ENCODE measurements at regions of chr22 and their contacts with region 1.

Region 1: GRCh38 chr22:39215426-39216120 is 29.2 kb downstream of the PDGFB start:
- DNase-seq: peak in 5 of 9 experiments; percentile 60 to 78 (median 67)
- ATAC-seq: peak; percentile 98
- H3K4me3 ChIP-seq: no peak overlapping the region
- H3K4me3 Mint-ChIP-seq: no peak overlapping the region
- H3K27ac ChIP-seq: no peak overlapping the region
- H3K27ac Mint-ChIP-seq: peak overlapping the region; percentile 57
- H3K4me1 ChIP-seq: peaks cover 4% of the 10 kb centered on the region
- H3K4me1 Mint-ChIP-seq: peaks cover 6% of the 10 kb centered on the region
- H3K27me3 ChIP-seq: no peaks in the 10 kb centered on the region
- H3K27me3 Mint-ChIP-seq: peaks cover 18% of the 10 kb centered on the region
- CTCF ChIP-seq: peak; percentile 42

Region 2: GRCh38 chr22:38398609-38399461 is 816.7 kb before region 1 on chr22:
- CTCF ChIA-PET with region 1: no interaction called
- POLR2A ChIA-PET with region 1: no interaction called
- intact Hi-C with region 1: no loop called
- DNase-seq: peak; percentile 67 to 91 (median 82)
- ATAC-seq: peak; percentile 79
- H3K4me3 ChIP-seq: peak overlapping the region; percentile 55 to 60
- H3K4me3 Mint-ChIP-seq: peak overlapping the region; percentile 81
- H3K27ac ChIP-seq: peak overlapping the region in 1 of 2 experiments; percentile 30
- H3K27ac Mint-ChIP-seq: no peak overlapping the region
- H3K4me1 ChIP-seq: no peaks in the 10 kb centered on the region
- H3K4me1 Mint-ChIP-seq: peaks cover 18% of the 10 kb centered on the region
- H3K27me3 ChIP-seq: no peaks in the 10 kb centered on the region
- H3K27me3 Mint-ChIP-seq: no peaks in the 10 kb centered on the region
- CTCF ChIP-seq: no peak

Region 3: GRCh38 chr22:39306581-39307361 is 91.2 kb after region 1 on chr22:
- CTCF ChIA-PET with region 1: interaction called, 18 read pairs
- POLR2A ChIA-PET with region 1: no interaction called
- intact Hi-C with region 1: loop called in 1 of 2 experiments (anchors 5 kb)
- DNase-seq: peak in 8 of 9 experiments; percentile 28 to 75 (median 60)
- ATAC-seq: peak; percentile 41
- H3K4me3 ChIP-seq: no peak overlapping the region
- H3K4me3 Mint-ChIP-seq: no peak overlapping the region
- H3K27ac ChIP-seq: no peak overlapping the region
- H3K27ac Mint-ChIP-seq: no peak overlapping the region
- H3K4me1 ChIP-seq: no peaks in the 10 kb centered on the region
- H3K4me1 Mint-ChIP-seq: peaks cover 9% of the 10 kb centered on the region
- H3K27me3 ChIP-seq: no peaks in the 10 kb centered on the region
- H3K27me3 Mint-ChIP-seq: no peaks in the 10 kb centered on the region
- CTCF ChIP-seq: no peak

Region 4: GRCh38 chr22:39314251-39314971 is 98.8 kb after region 1 on chr22:
- CTCF ChIA-PET with region 1: interaction called, 18 read pairs
- POLR2A ChIA-PET with region 1: no interaction called
- intact Hi-C with region 1: loop called in 1 of 2 experiments (anchors 5 kb)
- DNase-seq: peak in 1 of 9 experiments; percentile 32
- ATAC-seq: no peak
- H3K4me3 ChIP-seq: no peak overlapping the region
- H3K4me3 Mint-ChIP-seq: no peak overlapping the region
- H3K27ac ChIP-seq: no peak overlapping the region
- H3K27ac Mint-ChIP-seq: no peak overlapping the region
- H3K4me1 ChIP-seq: peaks cover 48% of the 10 kb centered on the region
- H3K4me1 Mint-ChIP-seq: peaks cover 46% of the 10 kb centered on the region
- H3K27me3 ChIP-seq: no peaks in the 10 kb centered on the region
- H3K27me3 Mint-ChIP-seq: no peaks in the 10 kb centered on the region
- CTCF ChIP-seq: no peak